Natural killer cell (primary cell): ENCODE measurements at regions of chr12 and their contacts with region 1.

Region 1: GRCh38 chr12:111434680-111435338 is 29.1 kb downstream of the SH2B3 start:
- DNase-seq: peak; percentile 84 to 94
- ATAC-seq: peak; percentile 59 to 85 (median 76)
- H3K4me3 ChIP-seq: peak overlapping the region; percentile 32
- H3K4me3 Mint-ChIP-seq: peak overlapping the region; percentile 98
- H3K27ac ChIP-seq: peak overlapping the region; percentile 97
- H3K27ac Mint-ChIP-seq: peak overlapping the region; percentile 96 to 100
- H3K4me1 ChIP-seq: peaks cover 98% of the 10 kb centered on the region
- H3K4me1 Mint-ChIP-seq: peaks cover 92 to 93% of the 10 kb centered on the region in 2 donors
- H3K27me3 ChIP-seq: no peaks in the 10 kb centered on the region
- H3K27me3 Mint-ChIP-seq: no peaks in the 10 kb centered on the region
- CTCF ChIP-seq: no peak

Region 2: GRCh38 chr12:109880016-109880931 is 1554.5 kb before region 1 on chr12 and contains the start of gene GLTP:
- intact Hi-C with region 1: loop called (anchors 10 kb)
- DNase-seq: peak; percentile 92 to 96
- ATAC-seq: peak; percentile 96 to 99 (median 96)
- H3K4me3 ChIP-seq: peak within 1 kb of the TSS; percentile 96
- H3K4me3 Mint-ChIP-seq: peak within 1 kb of the TSS; percentile 95
- H3K27ac ChIP-seq: peak within 1 kb of the TSS; percentile 95
- H3K27ac Mint-ChIP-seq: peak within 1 kb of the TSS; percentile 80 to 97
- H3K4me1 ChIP-seq: peaks cover 42% of the 10 kb centered on the region
- H3K4me1 Mint-ChIP-seq: peaks cover 48 to 55% of the 10 kb centered on the region in 2 donors
- H3K27me3 ChIP-seq: no peaks in the 10 kb centered on the region
- H3K27me3 Mint-ChIP-seq: no peaks in the 10 kb centered on the region
- CTCF ChIP-seq: peak; percentile 57
- total RNA-seq, gene GLTP: 48.6 to 52.8 (median 49.2) TPM

Region 3: GRCh38 chr12:111405149-111405860 is 29.5 kb before region 1 on chr12:
- intact Hi-C with region 1: loop called (anchors 1 kb)
- DNase-seq: peak; percentile 98
- ATAC-seq: peak; percentile 75 to 92 (median 77)
- H3K4me3 ChIP-seq: peak overlapping the region; percentile 37
- H3K4me3 Mint-ChIP-seq: peak overlapping the region; percentile 95
- H3K27ac ChIP-seq: peak overlapping the region; percentile 62
- H3K27ac Mint-ChIP-seq: peak overlapping the region; percentile 91 to 96
- H3K4me1 ChIP-seq: peaks cover 67% of the 10 kb centered on the region
- H3K4me1 Mint-ChIP-seq: peaks cover 45 to 69% of the 10 kb centered on the region in 2 donors
- H3K27me3 ChIP-seq: no peaks in the 10 kb centered on the region
- H3K27me3 Mint-ChIP-seq: peaks cover 1 to 2% of the 10 kb centered on the region in 2 donors
- CTCF ChIP-seq: peak; percentile 62

Region 4: GRCh38 chr12:111444925-111445725 is 10.3 kb after region 1 on chr12:
- intact Hi-C with region 1: loop called (anchors 1 kb)
- DNase-seq: peak; percentile 78 to 94
- ATAC-seq: peak; percentile 91 to 96 (median 96)
- H3K4me3 ChIP-seq: peak overlapping the region; percentile 4
- H3K4me3 Mint-ChIP-seq: peak overlapping the region; percentile 80
- H3K27ac ChIP-seq: peak overlapping the region; percentile 92
- H3K27ac Mint-ChIP-seq: peak overlapping the region; percentile 96 to 100
- H3K4me1 ChIP-seq: peaks cover 71% of the 10 kb centered on the region
- H3K4me1 Mint-ChIP-seq: peaks cover 81 to 84% of the 10 kb centered on the region in 2 donors
- H3K27me3 ChIP-seq: no peaks in the 10 kb centered on the region
- H3K27me3 Mint-ChIP-seq: no peaks in the 10 kb centered on the region
- CTCF ChIP-seq: no peak